ENCODE measurements at regions of chr22 and their contacts with region 1.

Region 1: DNA sequence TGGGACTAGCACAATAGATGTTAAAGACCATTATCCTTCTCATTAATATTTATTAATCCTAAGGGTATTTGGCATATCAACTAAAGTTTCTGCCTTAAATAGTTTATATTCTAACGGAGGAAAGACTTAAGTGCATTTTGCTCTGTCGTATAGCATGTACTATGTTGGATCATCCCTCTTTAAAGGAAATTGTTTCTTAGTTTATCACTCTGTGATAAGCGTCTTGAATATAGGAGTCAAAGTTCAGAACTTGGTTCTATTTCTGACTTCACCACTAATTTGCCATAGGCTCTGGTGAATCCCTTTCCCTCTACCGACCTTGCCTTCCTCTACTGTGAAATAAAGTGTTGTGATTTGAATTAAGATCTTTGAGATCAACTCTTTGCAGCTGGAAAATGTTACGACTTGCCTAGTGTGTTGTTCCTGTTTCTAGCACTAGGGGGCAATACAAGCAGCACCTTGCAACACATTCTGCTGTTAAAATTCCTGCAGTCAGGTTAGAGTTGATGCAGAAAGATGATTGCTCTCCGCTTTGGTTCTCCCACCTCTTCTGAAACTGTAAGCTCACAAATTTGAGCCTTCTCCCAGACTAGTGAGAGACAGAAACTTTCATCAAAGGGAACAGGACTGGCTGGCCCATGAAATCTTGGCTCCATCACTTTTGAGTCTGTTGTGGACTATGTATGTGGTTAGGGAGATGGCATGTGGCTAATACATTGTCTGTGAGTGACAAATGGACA is 27.8 kb upstream of the ZNRF3 start:
- DNase-seq: no peak
- ATAC-seq: peak; percentile 82

Region 2: DNA sequence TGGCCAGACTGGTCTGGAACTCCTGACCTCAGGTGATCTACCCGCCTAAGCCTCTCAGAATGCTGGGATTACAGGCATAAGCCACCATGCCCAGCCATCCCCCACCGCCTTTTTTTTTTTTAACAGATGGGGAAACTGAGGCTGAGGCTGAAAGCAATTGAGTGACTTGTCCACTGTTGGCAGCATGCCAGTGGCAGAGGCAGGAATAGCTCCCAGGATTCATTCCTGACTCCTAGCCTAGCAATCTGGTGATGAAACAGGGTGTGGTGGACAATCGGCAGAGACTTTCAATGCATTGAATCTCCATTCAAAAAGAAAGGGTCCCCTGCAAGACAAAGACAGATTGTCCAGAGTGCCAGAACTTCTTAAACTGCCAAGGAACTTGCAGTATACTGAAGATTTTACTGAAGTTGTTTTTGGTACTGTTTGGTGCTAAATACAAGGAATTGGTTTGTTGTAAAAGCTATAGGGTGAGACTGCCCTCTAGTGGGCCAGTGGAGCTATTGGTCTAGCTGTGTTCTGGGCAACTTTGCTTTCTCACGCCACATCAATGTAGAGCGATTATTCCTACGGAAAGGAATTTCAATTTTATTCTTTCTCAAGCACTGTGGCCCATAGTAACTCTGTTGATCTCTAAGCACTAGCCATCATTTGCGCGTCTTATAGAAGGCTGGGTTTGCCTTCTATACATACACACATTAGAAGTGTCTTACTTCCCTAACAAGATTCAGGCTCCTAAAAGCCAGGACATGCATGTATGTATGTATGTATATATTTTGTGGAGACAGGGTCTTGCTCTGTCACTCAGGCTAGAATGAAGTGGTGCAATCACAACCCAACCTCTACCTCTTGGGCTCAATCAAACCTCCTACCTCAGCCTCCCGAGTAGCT is 185.1 kb after region 1 on chr22:
- intact Hi-C with region 1: loop called (anchors 5 kb)
- DNase-seq: peak; percentile 82
- ATAC-seq: peak; percentile 87

Region 3: GRCh38 chr22:29154364-29155048 is 299.0 kb after region 1 on chr22:
- intact Hi-C with region 1: loop called (anchors 10 kb)
- DNase-seq: peak; percentile 88
- ATAC-seq: peak; percentile 71